Endothelial cell of umbilical vein (primary cell): ENCODE measurements at regions of chr6 and their contacts with region 1.

Region 1: DNA sequence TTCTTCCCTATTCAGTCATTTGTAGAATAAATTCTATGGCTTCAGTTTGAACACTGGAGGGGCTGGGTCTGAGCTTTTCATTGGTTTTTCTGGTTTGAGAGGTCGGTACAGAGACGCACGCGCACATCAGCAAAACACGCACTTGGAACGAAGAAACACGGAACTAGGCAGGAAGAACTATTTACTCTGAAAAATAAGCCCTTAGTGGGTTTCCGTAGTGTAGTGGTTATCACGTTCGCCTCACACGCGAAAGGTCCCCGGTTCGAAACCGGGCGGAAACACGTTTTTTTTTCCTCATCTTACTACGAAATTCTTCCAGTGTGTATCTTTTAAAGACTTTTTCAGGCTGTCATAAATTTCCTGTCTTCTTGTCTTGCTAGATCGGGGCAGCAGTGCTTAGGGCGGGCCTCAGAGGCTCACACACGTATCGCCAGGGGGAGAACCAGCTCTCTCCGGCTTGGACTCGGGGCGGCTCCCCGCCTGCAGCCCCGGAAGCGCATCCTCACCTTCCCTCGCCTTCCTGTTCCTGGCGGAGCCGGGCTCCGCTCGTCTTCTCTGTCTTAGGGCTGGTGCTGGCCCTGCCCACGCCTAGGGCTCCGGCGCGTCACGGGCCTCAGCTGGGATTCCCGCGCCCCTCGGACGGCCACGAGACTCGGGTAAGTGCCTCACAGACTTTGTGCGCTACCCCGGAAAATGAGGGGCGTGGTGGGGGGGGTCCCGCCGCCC is at the start of gene HMGN4:
- DNase-seq: peak; percentile 93
- H3K4me3 ChIP-seq: peak within 1 kb of the TSS; percentile 87 to 99 (median 98)
- H3K27ac ChIP-seq: peak within 1 kb of the TSS; percentile 85
- H3K4me1 ChIP-seq: peaks cover 21% of the 10 kb centered on the region
- H3K27me3 ChIP-seq: no peaks in the 10 kb centered on the region
- CTCF ChIP-seq: no peak
- POLR2A ChIP-seq: no peak
- total RNA-seq, gene HMGN4: 33.7 and 36.9 TPM in 2 replicates

Region 2: DNA sequence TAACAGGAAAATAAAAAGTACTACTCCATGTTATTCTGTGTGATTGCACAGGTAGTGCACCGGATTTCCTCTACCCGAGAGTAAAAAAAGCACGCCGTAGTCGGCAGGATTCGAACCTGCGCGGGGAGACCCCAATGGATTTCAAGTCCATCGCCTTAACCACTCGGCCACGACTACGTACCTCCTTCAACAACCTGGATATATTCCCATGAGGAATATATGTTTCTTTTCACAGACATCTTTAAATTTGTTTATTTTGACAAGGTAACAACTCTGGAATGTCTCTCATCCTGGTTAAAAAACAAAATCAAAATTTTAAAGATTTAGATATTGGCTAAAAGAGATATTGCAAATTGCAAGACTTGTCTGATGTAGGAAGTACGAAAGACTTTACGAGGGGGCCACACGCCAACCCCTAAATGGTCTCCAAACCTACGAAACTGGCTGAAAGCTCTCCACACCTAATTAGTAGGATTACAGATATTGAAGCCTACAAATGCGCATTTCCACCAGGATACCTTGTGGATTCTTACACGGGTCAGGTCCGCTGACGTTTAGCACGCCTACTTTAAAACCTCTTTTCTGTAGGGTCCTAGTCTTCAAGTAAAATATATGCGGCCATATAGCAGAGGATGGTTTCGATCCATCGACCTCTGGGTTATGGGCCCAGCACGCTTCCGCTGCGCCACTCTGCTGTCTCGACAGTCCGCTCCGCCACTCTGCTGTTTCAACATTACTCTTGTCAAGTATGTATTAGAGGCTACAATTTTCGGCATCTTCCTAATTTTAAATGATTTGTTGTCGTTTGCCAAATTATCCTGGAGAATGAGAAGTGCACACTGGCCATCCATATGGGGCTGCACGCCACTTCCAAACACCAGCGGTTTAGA is 225.3 kb before region 1 on chr6:
- CTCF ChIA-PET with region 1: no interaction called
- POLR2A ChIA-PET with region 1: no interaction called
- dilution Hi-C with region 1: no loop called
- intact Hi-C with region 1: loop called (anchors 1 kb)
- DNase-seq: peak; percentile 83
- H3K4me3 ChIP-seq: peak overlapping the region; percentile 39 to 98 (median 95)
- H3K27ac ChIP-seq: peak overlapping the region; percentile 38
- H3K4me1 ChIP-seq: peaks cover 12% of the 10 kb centered on the region
- H3K27me3 ChIP-seq: peaks cover 4 to 9% of the 10 kb centered on the region in 2 experiments
- CTCF ChIP-seq: no peak
- POLR2A ChIP-seq: no peak

Region 3: DNA sequence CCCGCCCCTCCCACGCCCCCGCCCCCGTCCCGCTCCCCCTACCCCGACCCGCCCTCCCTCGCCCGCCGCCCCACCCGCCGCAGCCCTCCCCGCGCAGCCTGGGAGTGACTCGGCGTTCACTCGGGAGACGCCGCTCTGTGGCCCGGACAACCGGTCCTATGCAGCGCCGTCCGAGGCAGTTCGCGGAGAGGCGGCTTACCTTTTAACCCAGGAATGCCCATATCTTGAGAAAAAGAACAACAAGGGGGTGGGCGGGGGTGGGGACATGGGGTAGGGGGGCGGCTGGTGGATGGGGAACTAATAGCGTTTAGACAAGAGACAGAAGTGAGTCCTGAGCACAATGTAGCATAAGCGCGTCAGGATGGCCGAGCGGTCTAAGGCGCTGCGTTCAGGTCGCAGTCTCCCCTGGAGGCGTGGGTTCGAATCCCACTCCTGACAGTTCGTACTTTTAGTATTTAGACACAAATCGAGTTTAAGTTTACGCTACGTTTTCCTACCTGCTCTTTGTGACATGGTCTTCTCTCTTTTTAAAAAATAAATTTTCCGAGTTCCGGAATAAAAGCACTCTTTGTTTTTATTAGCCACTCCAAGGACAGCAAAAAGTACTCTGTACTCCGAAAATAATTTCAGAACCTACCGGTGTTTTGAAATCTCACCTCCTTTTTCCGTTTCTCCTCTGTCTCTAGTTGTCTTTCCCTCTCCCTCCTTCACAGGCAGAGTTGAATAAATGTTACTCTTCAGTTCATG is 17.0 kb before region 1 on chr6:
- CTCF ChIA-PET with region 1: interaction called, 13 read pairs
- POLR2A ChIA-PET with region 1: no interaction called
- dilution Hi-C with region 1: no loop called
- intact Hi-C with region 1: loop called (anchors 1 kb)
- DNase-seq: peak; percentile 88
- H3K4me3 ChIP-seq: peak overlapping the region; percentile 46 to 82 (median 79)
- H3K27ac ChIP-seq: peak overlapping the region; percentile 76
- H3K4me1 ChIP-seq: peaks cover 10% of the 10 kb centered on the region
- H3K27me3 ChIP-seq: no peaks in the 10 kb centered on the region
- CTCF ChIP-seq: no peak
- POLR2A ChIP-seq: peak; percentile 68